HEK293 (cell line): ENCODE measurements at regions of chr14 and their contacts with region 1.

Region 1: GRCh38 chr14:75293920-75294642 is 15.5 kb downstream of the FOS start:
- H3K4me3 ChIP-seq: peak overlapping the region; percentile 68
- H3K27ac ChIP-seq: no peak overlapping the region
- H3K4me1 ChIP-seq: peaks cover 13% of the 10 kb centered on the region; the same call in 1 of the 2 replicates
- CTCF ChIP-seq: no peak

Region 2: DNA sequence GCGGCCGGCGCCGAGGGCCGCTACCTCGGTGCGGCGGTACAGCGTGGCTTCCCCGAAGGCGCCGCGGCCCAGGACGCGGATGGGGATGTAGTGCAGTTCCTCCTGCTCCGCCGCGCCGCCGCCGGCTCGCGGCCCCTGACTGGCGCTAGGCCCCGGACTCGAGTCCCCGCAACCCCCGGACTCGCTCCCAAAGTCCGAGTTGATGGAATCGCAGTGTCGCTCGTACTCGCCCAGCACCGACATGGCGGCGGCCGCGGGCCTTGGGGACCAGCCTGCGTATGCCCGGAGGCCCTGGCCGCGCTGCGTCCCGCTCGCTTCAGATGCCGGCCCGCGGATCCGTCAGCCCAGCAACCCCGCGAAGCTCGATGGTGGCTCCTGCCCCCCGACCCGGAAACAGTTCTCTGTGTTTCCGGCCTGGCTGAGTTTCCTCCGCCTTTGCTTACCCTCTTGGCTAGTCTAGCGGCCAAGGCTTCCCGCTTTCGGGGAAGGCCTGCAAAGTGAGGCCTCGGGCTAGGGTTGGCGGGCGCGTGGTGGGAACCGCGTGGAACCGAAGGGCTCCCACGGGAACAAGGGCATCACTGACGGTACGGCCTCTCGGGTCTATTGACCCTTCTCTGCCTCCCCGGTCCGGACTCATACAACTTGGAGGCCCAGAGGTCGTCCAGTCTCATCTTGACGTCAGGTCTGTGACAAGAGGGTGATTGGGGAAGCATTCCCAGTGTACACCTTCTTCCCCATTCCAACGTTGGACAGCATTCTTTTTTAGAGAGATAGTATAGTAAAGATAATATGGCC is 167.2 kb before region 1 on chr14 and contains the start of gene NEK9:
- CTCF ChIA-PET with region 1: interaction called, 45 read pairs
- POLR2A ChIA-PET with region 1: interaction called, 8 read pairs
- H3K4me3 ChIP-seq: peak within 1 kb of the TSS; percentile 98
- H3K27ac ChIP-seq: peak within 1 kb of the TSS; percentile 94
- H3K4me1 ChIP-seq: peaks cover 19% of the 10 kb centered on the region
- CTCF ChIP-seq: peak; percentile 67

Region 3: GRCh38 chr14:75132382-75133086 is 161.5 kb before region 1 on chr14:
- CTCF ChIA-PET with region 1: interaction called, 45 read pairs
- POLR2A ChIA-PET with region 1: interaction called, 7 read pairs
- H3K4me3 ChIP-seq: no peak overlapping the region
- H3K27ac ChIP-seq: no peak overlapping the region
- H3K4me1 ChIP-seq: 0 out of 2 replicates have a peak, but pooled peaks cover 4% of the 10 kb centered on the region
- CTCF ChIP-seq: peak; percentile 20; the same call in 1 of the 2 replicates

Region 4: DNA sequence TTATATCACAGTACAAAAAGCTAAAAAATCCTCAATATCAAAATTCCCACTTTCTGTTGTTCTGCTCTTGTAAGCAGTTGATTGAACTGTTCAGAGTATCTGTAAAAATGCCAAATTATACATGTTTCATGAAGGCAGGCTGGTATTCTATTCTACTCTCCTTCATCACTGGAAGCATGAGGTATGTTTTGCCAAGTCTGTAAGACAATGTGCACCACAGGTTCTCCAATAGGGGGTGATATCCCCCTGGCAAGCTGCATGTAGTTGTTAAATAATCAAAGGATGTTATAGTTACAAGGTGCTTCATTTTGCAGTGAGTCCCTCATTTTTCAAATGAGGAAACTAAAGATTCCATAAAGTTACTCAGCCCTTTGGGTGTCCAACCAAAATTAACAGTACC is 152.1 kb before region 1 on chr14:
- CTCF ChIA-PET with region 1: interaction called, 31 read pairs
- POLR2A ChIA-PET with region 1: interaction called, 4 read pairs
- H3K4me3 ChIP-seq: no peak overlapping the region
- H3K27ac ChIP-seq: no peak overlapping the region
- H3K4me1 ChIP-seq: 0 out of 2 replicates have a peak, but pooled peaks cover 3% of the 10 kb centered on the region
- CTCF ChIP-seq: no peak

Region 5: DNA sequence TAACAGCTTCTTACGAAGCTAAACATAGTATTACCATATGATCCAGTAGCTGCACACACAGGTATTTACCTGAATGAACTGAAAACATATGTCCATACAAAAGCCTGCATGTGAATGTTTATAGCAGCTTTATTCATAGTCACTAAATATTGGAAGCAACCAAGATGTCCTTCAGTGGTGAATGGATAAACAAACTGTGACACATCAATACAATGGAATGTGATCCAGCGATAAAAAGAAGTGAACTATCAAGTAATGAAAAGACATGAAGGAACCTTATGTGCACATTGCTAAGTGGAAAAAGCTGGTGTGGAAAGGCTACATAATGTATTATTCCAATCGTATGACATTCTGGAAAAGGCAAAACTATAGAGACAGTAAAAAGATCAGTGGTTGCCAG is 95.6 kb after region 1 on chr14:
- CTCF ChIA-PET with region 1: no interaction called
- POLR2A ChIA-PET with region 1: no interaction called
- H3K4me3 ChIP-seq: no peak overlapping the region
- H3K27ac ChIP-seq: no peak overlapping the region
- H3K4me1 ChIP-seq: no peaks in the 10 kb centered on the region
- CTCF ChIP-seq: no peak

Region 6: GRCh38 chr14:75720842-75721498 is 426.9 kb after region 1 on chr14:
- CTCF ChIA-PET with region 1: no interaction called
- POLR2A ChIA-PET with region 1: no interaction called
- H3K4me3 ChIP-seq: no peak overlapping the region
- H3K27ac ChIP-seq: no peak overlapping the region
- H3K4me1 ChIP-seq: peaks cover 7% of the 10 kb centered on the region
- CTCF ChIP-seq: no peak